Sciatic nerve (tissue), 2 donors: ENCODE measurements at regions of chr14 and their contacts with region 1.

Region 1: GRCh38 chr14:105045710-105046326 is 19.4 kb downstream of the GPR132 start:
- DNase-seq: peak; percentile 93
- ATAC-seq: peak; percentile 89

Region 2: DNA sequence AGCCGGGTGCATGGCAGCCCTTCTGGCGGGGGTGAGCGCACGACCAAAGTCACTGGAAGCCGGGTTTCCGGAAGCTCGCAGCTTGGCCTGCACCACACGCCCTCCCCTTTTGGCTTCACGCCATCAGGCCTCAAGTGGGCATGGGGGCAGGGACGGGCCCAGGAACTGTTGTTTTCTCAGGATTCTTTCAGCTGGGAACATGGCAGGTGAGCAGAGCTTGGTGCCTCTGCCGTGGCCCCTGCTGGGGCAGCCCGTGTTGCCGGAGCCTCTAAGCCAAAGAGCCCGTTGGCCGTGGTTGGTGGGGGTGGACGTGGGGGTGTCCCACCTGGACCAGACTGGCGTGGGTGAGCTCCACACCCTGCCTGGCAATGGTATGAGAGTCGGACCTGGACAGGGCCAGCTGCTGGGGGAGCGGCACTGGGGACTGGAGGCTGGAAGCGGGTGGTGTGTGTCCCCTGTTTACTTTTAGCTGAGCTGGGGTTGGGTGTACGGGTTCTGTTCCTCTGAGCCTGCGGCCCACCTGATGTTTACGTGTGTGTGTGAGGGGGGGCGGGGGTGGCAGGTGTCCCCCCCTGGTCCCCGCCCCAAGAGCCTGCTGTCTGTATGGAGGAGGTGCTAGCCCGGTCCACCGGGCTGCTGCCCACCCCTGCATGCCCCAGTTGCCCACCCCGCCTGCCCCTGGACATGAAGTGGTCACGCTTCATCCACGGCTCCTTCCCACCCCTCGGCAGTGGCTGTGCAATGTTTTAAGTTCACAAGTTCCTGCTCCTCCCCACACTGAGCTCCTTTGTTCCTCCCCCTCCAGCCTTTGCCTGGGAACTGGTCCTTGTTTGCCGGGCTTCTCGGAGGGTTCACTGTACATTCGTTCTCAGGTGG is 149.8 kb before region 1 on chr14:
- intact Hi-C with region 1: loop called (anchors 10 kb)
- DNase-seq: peak; percentile 69
- ATAC-seq: peak; percentile 6

Region 3: GRCh38 chr14:104957146-104958113 is 88.4 kb before region 1 on chr14:
- intact Hi-C with region 1: no loop called
- DNase-seq: no peak
- ATAC-seq: no peak

Region 4: GRCh38 chr14:106129274-106129673 is 1083.5 kb after region 1 on chr14:
- intact Hi-C with region 1: loop called (anchors 10 kb)
- DNase-seq: no peak
- ATAC-seq: no peak